ENCODE measurements at regions of chr5 and their contacts with region 1.

Region 1: DNA sequence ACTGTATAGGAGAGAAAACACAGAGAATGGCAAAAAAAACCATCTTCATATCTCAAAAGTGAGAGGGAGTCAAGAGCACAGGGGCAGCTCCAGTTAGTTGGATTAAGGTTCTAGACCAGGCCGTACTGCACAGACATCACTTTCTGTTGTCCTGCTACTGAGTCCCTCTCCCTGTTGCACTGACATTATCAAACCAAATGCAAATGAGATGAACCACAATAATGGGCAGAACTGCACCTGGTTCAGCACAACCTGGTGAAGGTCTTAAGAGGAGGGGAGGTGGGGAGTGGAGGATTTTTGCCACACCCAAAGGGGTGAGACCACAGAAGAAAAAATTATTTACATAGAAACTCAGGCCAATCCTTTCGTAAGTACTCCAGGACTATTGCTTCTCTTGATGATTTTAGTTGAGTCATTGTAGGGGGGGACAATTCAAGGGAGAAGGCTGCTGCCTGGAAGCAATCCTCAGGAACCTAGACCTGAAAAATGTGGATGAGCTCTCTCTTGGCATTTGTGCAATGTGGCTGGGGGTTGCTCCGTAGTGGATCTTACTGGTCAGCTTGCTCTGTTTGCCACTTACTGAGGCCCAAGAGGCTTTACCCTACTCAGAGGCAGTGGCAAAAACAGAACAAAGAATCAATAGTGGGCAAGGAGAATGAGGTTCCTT is 94.5 kb upstream of the PPP1R2B start:
- DNase-seq: no peak
- ATAC-seq: no peak

Region 2: GRCh38 chr5:156595132-156595787 is 160.3 kb before region 1 on chr5:
- intact Hi-C with region 1: loop called (anchors 5 kb)
- DNase-seq: peak; percentile 81
- ATAC-seq: peak; percentile 94

Region 3: DNA sequence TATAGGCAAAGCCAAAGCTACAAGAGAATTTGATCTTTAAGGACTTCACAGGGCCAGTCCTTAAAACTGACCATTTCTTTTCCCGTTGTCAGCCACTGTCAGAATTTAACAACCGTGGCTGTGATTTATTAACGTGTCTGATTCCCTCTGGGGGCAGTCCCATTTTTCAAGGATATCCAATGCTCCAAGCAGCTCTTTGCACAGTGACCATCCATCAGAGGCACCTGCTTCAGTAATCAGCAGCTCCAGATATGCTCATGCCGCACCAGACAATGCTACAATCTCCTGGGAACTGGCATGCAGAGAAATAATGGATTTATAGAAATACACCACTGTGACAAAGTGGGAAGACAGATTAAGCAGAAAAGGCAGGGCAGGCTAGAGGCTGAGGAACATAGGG is 68.8 kb before region 1 on chr5:
- intact Hi-C with region 1: loop called (anchors 5 kb)
- DNase-seq: no peak
- ATAC-seq: peak; percentile 68